Activated naive CD4-positive, alpha-beta T cell treated with anti-CD3 and anti-CD28 coated beads, Interleukin-2, amount 10 ng/mL, durations not matched to agents 7 days and 5 days (primary cell): ENCODE measurements at regions of chr10 and their contacts with region 1.

Region 1: DNA sequence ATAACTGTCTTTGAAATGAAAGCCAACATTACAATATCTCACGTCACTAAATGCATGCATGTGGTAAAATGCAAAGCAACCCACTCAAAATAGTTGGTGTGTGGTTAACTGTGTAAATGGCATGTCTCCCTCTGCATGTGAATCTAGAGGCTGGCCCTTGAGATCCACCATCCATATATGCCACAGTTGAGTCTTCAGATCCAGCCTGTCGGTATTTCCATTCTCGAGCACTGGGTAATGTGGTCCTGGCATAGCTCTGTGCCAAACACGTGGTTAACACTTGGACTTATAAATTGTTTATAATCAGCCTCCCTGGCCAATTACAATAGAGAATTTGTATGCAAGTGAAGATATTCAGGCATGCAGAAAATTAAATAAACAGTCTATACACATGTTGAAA is 90.3 kb downstream of the LYZL1 start:
- DNase-seq: no peak
- H3K4me3 Mint-ChIP-seq: no peak overlapping the region
- H3K27ac Mint-ChIP-seq: no peak overlapping the region
- H3K4me1 Mint-ChIP-seq: peaks cover 16% of the 10 kb centered on the region
- H3K27me3 Mint-ChIP-seq: peaks cover 29% of the 10 kb centered on the region

Region 2: DNA sequence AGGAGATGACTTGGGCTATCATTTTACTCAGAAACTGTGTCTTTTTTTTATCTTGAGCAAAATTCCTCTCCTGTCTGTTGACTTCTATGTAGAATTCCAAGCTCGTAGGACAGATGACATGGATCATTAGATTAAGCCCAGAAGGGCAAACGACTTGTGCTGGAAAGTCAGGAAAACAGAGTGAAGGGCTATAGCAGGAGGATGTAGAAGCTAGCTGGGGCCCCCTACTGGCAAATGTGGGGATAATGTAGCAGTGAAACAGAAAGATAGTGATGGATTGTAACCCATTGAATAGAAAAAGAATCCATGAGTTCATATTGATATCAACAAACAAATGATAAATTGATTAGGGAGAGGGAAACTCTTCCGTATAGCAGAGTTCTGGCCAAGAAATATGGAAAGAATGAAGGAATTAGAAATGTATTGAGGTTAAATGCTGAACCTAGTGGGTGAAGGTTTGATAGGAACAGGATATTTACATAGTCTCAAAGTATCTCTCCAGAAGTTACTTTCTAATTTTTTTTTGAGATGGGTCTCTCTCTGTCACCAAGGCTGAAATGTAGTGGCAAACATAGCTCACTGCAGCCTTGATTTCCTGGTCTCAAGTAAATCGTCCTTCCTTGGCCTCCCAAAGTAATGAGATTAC is 13.3 kb after region 1 on chr10:
- CTCF ChIA-PET with region 1: interaction called, 20 read pairs
- DNase-seq: peak; percentile 51
- H3K4me3 Mint-ChIP-seq: no peak overlapping the region
- H3K27ac Mint-ChIP-seq: no peak overlapping the region
- H3K4me1 Mint-ChIP-seq: no peaks in the 10 kb centered on the region
- H3K27me3 Mint-ChIP-seq: peaks cover 25% of the 10 kb centered on the region